ENCODE measurements at regions of chr11 and their contacts with region 1.

Region 1: DNA sequence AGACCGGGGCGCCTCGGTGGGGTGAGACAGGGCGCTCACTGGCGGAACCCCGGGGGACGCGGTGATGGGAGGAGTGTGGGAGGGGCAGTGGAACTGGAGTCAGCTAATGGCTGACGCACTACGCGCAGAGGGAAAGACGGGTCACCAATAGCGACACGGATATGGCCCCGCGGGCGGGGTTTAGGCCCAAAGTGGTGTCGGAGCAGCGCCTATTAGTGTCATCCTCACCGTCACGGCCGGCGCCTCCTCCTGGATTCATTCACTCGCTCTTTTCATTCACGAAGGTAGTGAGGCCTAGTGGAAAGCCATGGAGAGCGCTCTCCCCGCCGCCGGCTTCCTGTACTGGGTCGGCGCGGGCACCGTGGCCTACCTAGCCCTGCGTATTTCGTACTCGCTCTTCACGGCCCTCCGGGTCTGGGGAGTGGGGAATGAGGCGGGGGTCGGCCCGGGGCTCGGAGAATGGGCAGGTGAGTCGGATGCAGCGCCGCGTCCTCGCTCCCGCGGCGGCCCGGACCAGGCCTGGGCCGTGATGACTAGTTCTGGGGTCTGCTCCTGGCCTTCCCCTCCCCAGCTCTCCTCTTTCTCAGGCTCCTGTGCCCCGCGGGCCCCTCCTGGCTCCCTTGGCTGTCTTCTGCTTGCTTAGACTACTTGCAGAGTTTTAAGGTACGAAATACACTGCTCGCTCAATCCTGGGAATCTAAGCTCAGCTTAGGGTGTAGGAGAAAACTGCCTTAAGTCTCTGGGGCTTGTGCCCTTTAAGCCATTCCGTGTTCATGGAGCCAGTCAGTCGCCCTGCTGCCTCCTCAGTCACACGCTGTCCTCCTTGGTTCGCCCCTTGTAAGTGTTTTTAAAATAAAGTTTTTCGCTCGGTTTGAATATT is at the start of gene HSD17B12:
- DNase-seq: peak; percentile 99
- H3K4me3 ChIP-seq: peak within 1 kb of the TSS; percentile 84 to 99 (median 91)
- H3K27ac ChIP-seq: peak within 1 kb of the TSS; percentile 83
- H3K4me1 ChIP-seq: peaks cover 29% of the 10 kb centered on the region
- H3K27me3 ChIP-seq: peaks cover 0 to 6% of the 10 kb centered on the region in 2 experiments
- CTCF ChIP-seq: no peak
- POLR2A ChIP-seq: peak; percentile 89
- total RNA-seq, gene HSD17B12: 96.5 and 96.6 TPM in 2 replicates

Region 2: DNA sequence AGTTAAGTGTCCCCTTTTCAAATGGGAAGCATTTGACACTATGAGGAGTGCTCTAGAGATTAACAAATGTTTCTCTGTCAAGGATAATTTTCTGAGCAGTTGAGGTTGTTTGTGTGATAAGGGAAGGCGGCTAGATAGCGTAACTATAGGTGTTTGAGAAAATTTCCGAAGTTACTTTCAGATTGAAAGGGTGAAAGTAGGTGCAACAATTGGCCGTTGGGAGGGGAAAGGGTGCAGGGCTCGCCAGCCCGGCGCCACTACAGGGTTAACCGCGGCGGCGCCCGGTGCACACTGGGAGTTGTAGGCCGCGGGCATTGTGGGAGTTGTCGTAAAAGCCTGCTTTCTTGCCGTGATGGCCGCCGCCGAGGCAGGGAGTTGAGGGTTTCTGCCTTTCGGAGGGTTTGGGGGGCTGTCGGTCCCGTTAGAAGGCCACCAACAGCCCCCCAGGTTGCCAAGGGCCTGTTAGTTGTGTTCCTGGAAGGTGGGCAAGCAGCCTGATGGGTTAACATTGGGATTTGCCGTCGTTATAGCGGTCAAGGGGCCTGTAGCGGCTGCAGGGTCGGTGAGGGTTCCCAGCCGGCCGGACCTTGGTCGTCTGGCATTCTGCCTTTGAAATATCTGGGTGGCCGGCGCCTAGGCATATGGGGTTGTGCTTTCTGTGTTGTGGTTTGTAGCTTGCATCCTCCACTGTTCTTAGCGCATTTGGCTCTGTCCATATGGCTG is 36.7 kb before region 1 on chr11:
- CTCF ChIA-PET with region 1: no interaction called
- POLR2A ChIA-PET with region 1: interaction called, 3 read pairs
- dilution Hi-C with region 1: no loop called
- intact Hi-C with region 1: loop called (anchors 2 kb)
- DNase-seq: peak; percentile 84
- H3K4me3 ChIP-seq: peak overlapping the region; percentile 39 to 92 (median 89)
- H3K27ac ChIP-seq: peak overlapping the region; percentile 47
- H3K4me1 ChIP-seq: peaks cover 13% of the 10 kb centered on the region
- H3K27me3 ChIP-seq: peaks cover 7 to 13% of the 10 kb centered on the region in 2 experiments
- CTCF ChIP-seq: no peak
- POLR2A ChIP-seq: peak; percentile 83